CD4-positive, alpha-beta memory T cell (primary cell): ENCODE measurements at regions of chr3 and their contacts with region 1.

Region 1: DNA sequence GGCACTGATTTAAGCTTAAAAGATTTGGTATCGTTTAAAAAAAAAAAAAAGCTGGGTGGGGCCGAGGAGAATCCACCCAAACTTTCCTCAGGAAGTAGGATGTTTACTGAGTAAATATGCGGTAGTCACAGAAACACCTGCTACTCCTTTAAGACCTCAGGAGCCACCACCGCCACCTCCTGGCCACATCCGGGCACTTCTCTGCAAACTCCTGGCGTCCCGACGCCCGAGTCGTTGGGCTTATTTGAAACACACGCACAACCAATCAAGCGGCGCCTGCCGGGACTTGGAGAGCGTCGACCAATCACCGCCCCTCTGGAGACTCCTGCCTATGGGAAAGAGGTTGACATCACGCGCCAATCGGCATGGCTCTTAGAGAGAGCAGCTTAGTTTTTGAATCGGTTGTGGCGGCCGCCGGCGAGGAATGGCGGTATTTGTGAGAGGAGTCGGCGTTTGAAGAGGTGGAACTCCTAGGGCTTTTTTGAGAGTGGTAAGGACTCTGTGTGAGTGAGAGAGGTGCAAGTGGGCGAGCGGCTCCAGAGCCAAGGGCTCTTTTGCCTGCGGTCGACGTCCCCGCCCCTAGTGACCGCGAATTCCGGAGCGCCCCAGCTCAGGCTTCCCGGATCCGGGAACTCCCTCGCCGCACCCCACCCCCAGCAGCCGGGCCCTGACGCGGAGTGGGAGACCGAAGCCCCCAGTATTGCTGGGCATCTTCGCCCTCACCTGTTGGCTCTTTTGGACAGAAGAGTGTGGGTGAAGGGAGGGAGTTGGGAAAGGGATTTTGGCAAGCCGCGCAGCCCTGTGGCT is at the start of gene ECT2:
- DNase-seq: peak; percentile 94 to 99 (median 97)
- H3K4me3 ChIP-seq: peak within 1 kb of the TSS; percentile 73 to 76
- H3K4me3 Mint-ChIP-seq: peak within 1 kb of the TSS; percentile 94 to 99 (median 98)
- H3K27ac ChIP-seq: peak within 1 kb of the TSS; percentile 65
- H3K27ac Mint-ChIP-seq: peak within 1 kb of the TSS; percentile 84 to 96 (median 94)
- H3K4me1 ChIP-seq: peaks cover 26% of the 10 kb centered on the region
- H3K4me1 Mint-ChIP-seq: peaks cover 19 to 38% (median 27%) of the 10 kb centered on the region in 4 donors
- H3K27me3 ChIP-seq: no peaks in the 10 kb centered on the region
- H3K27me3 Mint-ChIP-seq: no peaks in the 10 kb centered on the region
- total RNA-seq, gene ECT2: 2.4 to 2.9 TPM

Region 2: GRCh38 chr3:170869645-170870593 is 1880.7 kb before region 1 on chr3 and contains the start of gene RPL22L1:
- CTCF ChIA-PET with region 1: no interaction called
- POLR2A ChIA-PET with region 1: interaction called, 4 read pairs
- intact Hi-C with region 1: loop called (anchors 1 kb)
- DNase-seq: peak; percentile 92 to 94 (median 94)
- H3K4me3 ChIP-seq: peak within 1 kb of the TSS; percentile 76 to 92
- H3K4me3 Mint-ChIP-seq: peak within 1 kb of the TSS; percentile 91 to 98 (median 96)
- H3K27ac ChIP-seq: peak within 1 kb of the TSS; percentile 82
- H3K27ac Mint-ChIP-seq: peak within 1 kb of the TSS; percentile 92 to 99 (median 98)
- H3K4me1 ChIP-seq: peaks cover 34% of the 10 kb centered on the region
- H3K4me1 Mint-ChIP-seq: peaks cover 12 to 36% (median 24%) of the 10 kb centered on the region in 4 donors
- H3K27me3 ChIP-seq: no peaks in the 10 kb centered on the region
- H3K27me3 Mint-ChIP-seq: no peaks in the 10 kb centered on the region
- total RNA-seq, gene RPL22L1: 31.9 to 32.3 TPM

Region 3: DNA sequence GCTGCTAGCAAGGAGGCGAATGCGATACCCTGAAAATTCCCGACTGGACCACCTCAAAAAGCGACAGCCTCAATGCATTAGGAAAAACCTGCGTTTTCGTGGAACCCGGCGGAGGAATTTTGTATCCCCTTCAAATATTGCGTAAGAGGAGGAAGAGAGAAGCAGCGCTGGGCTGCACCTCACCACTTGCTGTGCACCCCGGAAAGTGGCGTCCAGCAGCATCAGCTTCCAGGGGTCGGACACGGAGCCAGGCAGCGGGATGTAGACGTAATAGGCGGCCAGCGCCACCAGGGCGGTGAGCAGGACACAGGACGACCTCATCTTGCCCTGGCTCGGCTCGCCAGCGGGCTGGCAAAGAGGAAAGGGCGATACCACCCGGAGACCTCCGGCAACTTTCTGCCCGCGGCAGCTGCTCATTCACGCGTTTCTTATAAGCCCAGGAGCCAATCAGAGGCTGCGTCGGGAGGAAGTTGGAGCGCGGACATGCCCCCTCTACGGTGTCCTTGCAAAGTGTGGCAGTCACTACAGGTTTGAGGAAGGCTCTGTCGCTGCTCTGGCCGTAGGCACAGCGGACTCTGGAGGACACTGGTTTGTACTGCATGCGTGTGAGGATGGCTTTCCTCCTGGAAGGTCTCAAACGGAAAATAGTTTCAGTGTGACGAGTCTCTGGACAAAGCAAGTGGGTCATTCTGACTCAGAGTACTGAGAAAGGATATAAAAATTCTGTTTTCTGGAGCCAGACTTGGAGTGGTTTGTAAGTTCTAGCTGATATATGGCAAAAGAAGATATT is 39.7 kb before region 1 on chr3 and contains the start of gene NCEH1:
- CTCF ChIA-PET with region 1: interaction called, 5 read pairs
- POLR2A ChIA-PET with region 1: interaction called, 9 read pairs
- intact Hi-C with region 1: loop called (anchors 1 kb)
- DNase-seq: peak; percentile 59 to 71 (median 62)
- H3K4me3 ChIP-seq: peak within 1 kb of the TSS; percentile 85 to 96
- H3K4me3 Mint-ChIP-seq: peak within 1 kb of the TSS; percentile 94 to 99 (median 96)
- H3K27ac ChIP-seq: peak within 1 kb of the TSS; percentile 37
- H3K27ac Mint-ChIP-seq: peak within 1 kb of the TSS; percentile 52 to 91 (median 89)
- H3K4me1 ChIP-seq: peaks cover 11% of the 10 kb centered on the region
- H3K4me1 Mint-ChIP-seq: peaks cover 9 to 30% (median 23%) of the 10 kb centered on the region in 4 donors
- H3K27me3 ChIP-seq: no peaks in the 10 kb centered on the region
- H3K27me3 Mint-ChIP-seq: no peaks in the 10 kb centered on the region
- total RNA-seq, gene NCEH1: 3.9 to 5.1 TPM

Region 4: GRCh38 chr3:172808969-172809546 is 58.5 kb after region 1 on chr3:
- CTCF ChIA-PET with region 1: no interaction called
- POLR2A ChIA-PET with region 1: no interaction called
- intact Hi-C with region 1: no loop called
- DNase-seq: peak in 4 of 5 donors; percentile 7 to 28 (median 12)
- H3K4me3 ChIP-seq: no peak overlapping the region
- H3K4me3 Mint-ChIP-seq: no peak overlapping the region
- H3K27ac ChIP-seq: no peak overlapping the region
- H3K27ac Mint-ChIP-seq: no peak overlapping the region
- H3K4me1 ChIP-seq: no peaks in the 10 kb centered on the region
- H3K4me1 Mint-ChIP-seq: no peaks in the 10 kb centered on the region
- H3K27me3 ChIP-seq: no peaks in the 10 kb centered on the region
- H3K27me3 Mint-ChIP-seq: no peaks in the 10 kb centered on the region